Activated CD8-positive, alpha-beta T cell treated with anti-CD3 and anti-CD28 coated beads for 36 hours (primary cell): ENCODE measurements at regions of chr16 and their contacts with region 1.

Region 1: DNA sequence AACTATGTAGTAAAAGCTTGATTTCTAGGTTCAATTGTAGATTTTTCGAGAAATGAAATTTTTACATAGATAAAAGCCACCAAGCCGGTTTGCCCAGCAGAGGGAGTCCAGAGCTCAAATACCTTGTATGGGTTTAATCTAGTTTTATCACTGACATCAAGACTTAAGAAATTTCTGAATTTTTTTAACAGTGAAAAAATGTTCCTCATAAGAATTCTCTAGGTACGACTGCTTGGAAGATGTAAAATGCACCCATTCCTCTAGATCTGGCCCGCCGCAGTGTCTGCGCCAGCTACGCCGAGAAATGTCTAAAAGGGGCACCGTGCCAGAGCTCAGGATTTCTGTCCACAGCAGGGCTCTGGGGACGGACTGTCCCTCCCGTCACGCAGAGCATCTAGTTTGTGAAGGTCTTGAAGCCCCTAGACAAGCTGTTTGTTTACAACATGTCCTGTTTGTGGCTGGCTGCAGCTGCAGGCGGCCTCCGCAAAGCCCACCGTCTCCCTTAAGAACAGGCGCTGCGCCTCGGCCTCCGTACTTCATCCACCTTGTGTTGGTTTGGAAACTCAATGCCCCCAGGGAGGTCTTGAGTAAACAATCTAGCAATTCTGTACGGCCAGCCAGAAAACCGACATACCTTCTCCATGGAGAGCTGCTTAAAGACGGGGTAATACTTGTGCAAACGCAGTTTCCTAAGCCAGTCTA is 24.8 kb downstream of the MAP1LC3B start:
- DNase-seq: peak; percentile 71
- ATAC-seq: no peak
- H3K4me3 Mint-ChIP-seq: no peak overlapping the region
- H3K27ac Mint-ChIP-seq: no peak overlapping the region
- H3K4me1 Mint-ChIP-seq: no peaks in the 10 kb centered on the region
- H3K27me3 Mint-ChIP-seq: no peaks in the 10 kb centered on the region
- CTCF ChIP-seq: peak; percentile 76

Region 2: GRCh38 chr16:87393680-87394055 is 23.3 kb before region 1 on chr16:
- CTCF ChIA-PET with region 1: interaction called, 17 read pairs
- POLR2A ChIA-PET with region 1: no interaction called
- intact Hi-C with region 1: no loop called
- DNase-seq: no peak
- ATAC-seq: no peak
- H3K4me3 Mint-ChIP-seq: peak overlapping the region; percentile 83
- H3K27ac Mint-ChIP-seq: peak overlapping the region; percentile 90
- H3K4me1 Mint-ChIP-seq: peaks cover 43% of the 10 kb centered on the region
- H3K27me3 Mint-ChIP-seq: no peaks in the 10 kb centered on the region
- CTCF ChIP-seq: no peak

Region 3: GRCh38 chr16:87451563-87452210 is 34.7 kb after region 1 on chr16:
- CTCF ChIA-PET with region 1: interaction called, 11 read pairs
- POLR2A ChIA-PET with region 1: no interaction called
- intact Hi-C with region 1: no loop called
- DNase-seq: no peak
- ATAC-seq: no peak
- H3K4me3 Mint-ChIP-seq: no peak overlapping the region
- H3K27ac Mint-ChIP-seq: no peak overlapping the region
- H3K4me1 Mint-ChIP-seq: peaks cover 2% of the 10 kb centered on the region
- H3K27me3 Mint-ChIP-seq: no peaks in the 10 kb centered on the region
- CTCF ChIP-seq: no peak